ENCODE measurements at regions of chr17 and their contacts with region 1.

Region 1: GRCh38 chr17:4789901-4790704 is 1.3 kb downstream of the GLTPD2 start:
- DNase-seq: peak; percentile 82
- H3K4me3 Mint-ChIP-seq: peak overlapping the region; percentile 90
- H3K27ac Mint-ChIP-seq: peak overlapping the region; percentile 94
- H3K4me1 Mint-ChIP-seq: peaks cover 21% of the 10 kb centered on the region
- H3K27me3 Mint-ChIP-seq: peaks cover 39% of the 10 kb centered on the region

Region 2: DNA sequence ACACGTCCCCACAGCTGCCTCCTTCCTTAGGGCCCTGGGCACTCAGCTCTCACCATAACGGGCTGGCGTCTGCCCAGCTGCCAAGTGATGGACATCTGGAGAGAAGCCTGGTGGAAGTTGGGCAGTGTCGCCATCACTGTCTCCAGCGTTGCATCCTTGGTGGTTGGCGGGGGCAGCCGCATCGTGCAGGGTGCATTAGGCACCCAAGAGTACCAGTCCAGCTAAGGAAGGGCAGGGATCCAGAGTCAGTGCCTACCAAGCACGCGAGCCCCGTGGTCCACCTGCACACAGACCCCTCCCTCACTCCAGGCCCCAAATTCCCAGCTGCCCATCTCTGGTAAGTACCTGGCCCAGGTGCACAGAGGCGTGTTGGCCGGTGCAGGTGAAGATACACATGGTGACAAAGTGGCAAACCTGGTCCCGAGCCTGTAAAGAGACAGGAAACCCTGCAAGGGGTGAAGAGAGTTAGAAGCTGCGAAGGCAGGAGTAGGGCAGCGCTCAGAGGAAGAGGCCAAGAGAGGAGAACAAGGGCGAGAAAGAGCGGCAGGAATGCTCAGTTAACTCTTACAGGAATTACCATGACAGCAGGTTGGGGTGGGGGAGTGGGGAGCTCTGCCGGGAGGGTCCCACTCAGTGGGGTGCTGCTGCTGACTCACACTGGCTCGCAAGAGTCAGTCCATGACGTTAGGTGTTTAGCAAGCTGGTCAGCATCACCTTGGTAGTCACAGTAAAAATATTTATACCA is 158.1 kb before region 1 on chr17:
- intact Hi-C with region 1: loop called (anchors 5 kb)
- DNase-seq: no peak
- H3K4me3 Mint-ChIP-seq: no peak overlapping the region
- H3K27ac Mint-ChIP-seq: no peak overlapping the region
- H3K4me1 Mint-ChIP-seq: peaks cover 15% of the 10 kb centered on the region
- H3K27me3 Mint-ChIP-seq: peaks cover 31% of the 10 kb centered on the region

Region 3: DNA sequence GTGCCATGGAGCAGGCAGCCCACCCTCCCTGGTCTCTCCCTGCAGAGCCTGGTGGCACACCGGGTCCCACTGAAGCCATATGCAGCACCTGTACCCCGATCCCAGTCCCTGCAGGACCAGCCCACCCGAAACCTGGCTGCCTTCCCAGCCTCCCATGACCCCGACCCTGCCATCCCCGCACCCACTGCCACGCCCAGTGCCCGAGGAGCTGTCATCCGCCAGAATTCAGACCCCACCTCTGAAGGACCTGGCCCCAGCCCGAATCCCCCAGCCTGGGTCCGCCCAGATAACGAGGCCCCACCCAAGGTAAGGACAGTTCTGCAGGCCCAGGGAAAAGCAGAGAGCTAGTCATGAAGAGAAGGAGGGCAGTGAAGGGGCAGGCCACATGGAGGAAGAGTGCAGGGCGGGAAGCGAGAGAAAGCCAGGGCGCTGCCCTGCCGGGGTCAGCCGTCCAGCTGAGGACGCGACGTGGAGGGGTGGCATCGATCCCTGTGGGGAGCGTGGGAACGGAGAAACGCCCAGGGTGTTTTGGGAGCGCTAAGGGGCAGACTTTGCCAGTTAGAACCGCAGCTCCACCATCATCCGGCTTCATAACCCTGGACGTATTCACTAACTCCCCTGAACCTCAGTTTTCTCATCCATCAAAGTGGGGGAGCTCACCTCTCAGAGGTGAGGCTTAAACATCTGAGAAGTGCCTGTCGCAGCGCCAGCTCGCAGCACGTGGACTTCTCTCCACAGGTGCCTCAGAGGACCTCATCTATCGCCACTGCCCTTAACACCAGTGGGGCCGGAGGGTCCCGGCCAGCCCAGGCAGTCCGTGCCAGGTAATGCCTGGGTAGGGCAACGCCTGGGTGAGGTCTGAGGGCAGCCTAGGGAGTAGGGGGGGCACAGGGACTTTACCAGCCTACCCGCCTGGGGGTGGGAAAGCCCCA is 101.6 kb after region 1 on chr17:
- intact Hi-C with region 1: loop called (anchors 2 kb)
- DNase-seq: no peak
- H3K4me3 Mint-ChIP-seq: no peak overlapping the region
- H3K27ac Mint-ChIP-seq: no peak overlapping the region
- H3K4me1 Mint-ChIP-seq: peaks cover 1% of the 10 kb centered on the region
- H3K27me3 Mint-ChIP-seq: no peaks in the 10 kb centered on the region

Region 4: DNA sequence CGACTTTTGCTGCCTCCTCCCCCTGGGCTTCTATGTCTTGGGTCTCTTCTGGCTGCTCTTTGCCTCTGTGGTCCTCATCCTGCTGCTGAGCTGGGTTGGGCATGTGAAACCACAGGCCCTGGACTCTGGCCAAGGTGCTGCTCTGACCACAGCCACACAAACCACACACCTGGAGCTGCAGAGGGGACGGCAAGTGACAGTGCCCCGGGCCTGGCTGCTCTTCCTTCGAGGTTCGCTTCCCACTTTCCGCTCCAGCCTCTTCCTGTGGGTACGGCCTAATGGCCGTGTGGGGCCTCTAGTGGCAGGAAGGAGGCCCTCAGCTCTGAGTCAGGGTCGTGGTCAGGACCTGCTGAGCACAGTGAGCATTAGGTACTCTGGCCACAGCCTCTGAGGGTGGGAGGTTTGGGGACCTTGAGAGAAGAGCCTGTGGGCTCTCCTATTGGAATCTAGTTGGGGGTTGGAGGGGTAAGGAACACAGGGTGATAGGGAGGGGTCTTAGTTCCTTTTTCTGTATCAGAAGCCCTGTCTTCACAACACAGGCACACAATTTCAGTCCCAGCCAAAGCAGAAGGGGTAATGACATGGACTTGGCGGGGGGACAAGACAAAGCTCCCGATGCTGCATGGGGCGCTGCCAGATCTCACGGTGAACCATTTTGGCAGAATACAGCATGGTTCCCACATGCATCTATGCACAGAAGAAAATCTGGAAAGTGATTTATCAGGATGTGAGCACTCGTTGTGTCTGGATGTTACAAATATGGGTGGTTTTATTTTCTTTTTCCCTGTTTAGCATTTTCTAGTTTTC is 144.3 kb after region 1 on chr17:
- intact Hi-C with region 1: no loop called
- DNase-seq: no peak
- H3K4me3 Mint-ChIP-seq: no peak overlapping the region
- H3K27ac Mint-ChIP-seq: peak overlapping the region; percentile 40
- H3K4me1 Mint-ChIP-seq: peaks cover 26% of the 10 kb centered on the region
- H3K27me3 Mint-ChIP-seq: no peaks in the 10 kb centered on the region

Measured in activated T-helper 2 cell treated with anti-CD3 and anti-CD28 coated beads, Interferon-gamma antibody, Interleukin-2, Interleukin-4, amounts not matched to agents 10 μg/mL and 5 μg/mL and 100 μg/mL, durations not matched to agents 14 hours and 24 hours and 36 hours (primary cell).